PC-3 (cell line): ENCODE measurements at regions of chr3 and their contacts with region 1.

Region 1: DNA sequence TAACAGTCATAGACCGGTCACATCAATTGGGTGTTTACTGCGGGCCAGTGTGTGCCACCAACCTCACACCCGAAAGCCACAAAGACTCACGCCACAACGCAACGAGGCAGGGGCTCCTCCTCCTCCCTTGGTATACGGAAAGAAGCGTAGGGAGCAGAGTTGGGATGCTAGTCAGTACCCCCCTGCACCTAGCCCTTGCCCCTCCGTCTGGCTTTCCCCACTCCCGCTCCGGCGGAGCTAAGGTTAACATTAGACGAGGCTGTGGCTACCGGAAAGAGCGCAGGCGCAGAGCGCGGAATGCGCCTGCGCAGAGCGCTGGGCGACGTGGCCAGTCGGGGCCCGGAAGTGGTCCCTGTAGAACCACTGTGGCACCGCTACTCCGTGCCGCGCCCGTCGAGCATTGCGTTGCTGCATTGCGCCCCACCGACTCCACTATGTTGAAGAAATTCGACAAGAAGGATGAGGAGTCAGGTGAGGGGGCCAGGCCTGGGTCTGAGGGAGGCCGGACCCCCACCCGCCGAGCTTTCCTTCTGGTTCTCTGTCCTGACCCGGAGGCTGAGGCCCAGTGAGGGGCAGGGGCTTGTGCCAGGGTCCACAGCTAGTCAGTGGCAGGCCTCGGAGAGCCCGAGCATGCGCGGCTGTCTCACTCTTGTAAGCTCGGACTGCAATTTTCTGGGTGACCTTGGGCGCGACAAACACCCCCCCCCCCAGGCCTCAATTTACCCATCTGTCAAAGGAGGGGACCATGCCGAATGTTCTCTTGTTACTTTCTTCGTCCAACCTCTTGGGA is at the start of gene COPG1:
- DNase-seq: peak; percentile 87
- ATAC-seq: peak; percentile 74
- H3K4me3 ChIP-seq: peak within 1 kb of the TSS; percentile 87
- H3K27ac ChIP-seq: peak within 1 kb of the TSS; percentile 64
- H3K4me1 ChIP-seq: peaks cover 24% of the 10 kb centered on the region
- H3K27me3 ChIP-seq: no peaks in the 10 kb centered on the region
- CTCF ChIP-seq: no peak
- total RNA-seq, gene COPG1: 124 and 152 TPM in 2 replicates

Region 2: DNA sequence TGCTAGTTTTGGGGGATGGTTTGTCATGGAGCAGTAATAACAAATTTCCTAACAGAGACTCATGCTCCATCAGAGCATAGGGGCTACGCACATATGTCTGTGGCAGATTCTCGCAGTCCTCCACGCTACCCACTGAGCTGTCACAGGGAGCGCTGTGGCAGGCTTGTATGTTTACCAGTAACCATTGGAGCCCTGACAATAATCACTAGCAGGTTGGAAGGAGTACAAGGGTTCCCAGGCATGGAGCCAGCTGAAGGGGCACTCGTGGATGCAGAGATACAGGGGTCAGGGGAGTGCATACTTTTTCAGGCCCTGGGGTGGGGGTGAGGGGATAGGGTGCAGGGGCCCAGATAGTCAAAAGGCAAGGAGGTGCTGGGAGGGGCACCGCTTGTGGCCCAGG is 196.8 kb before region 1 on chr3:
- CTCF ChIA-PET with region 1: interaction called, 3 read pairs
- POLR2A ChIA-PET with region 1: no interaction called
- intact Hi-C with region 1: loop called (anchors 1 kb)
- DNase-seq: no peak
- ATAC-seq: no peak
- H3K4me3 ChIP-seq: no peak overlapping the region
- H3K27ac ChIP-seq: no peak overlapping the region
- H3K4me1 ChIP-seq: no peaks in the 10 kb centered on the region
- H3K27me3 ChIP-seq: no peaks in the 10 kb centered on the region
- CTCF ChIP-seq: no peak

Region 3: DNA sequence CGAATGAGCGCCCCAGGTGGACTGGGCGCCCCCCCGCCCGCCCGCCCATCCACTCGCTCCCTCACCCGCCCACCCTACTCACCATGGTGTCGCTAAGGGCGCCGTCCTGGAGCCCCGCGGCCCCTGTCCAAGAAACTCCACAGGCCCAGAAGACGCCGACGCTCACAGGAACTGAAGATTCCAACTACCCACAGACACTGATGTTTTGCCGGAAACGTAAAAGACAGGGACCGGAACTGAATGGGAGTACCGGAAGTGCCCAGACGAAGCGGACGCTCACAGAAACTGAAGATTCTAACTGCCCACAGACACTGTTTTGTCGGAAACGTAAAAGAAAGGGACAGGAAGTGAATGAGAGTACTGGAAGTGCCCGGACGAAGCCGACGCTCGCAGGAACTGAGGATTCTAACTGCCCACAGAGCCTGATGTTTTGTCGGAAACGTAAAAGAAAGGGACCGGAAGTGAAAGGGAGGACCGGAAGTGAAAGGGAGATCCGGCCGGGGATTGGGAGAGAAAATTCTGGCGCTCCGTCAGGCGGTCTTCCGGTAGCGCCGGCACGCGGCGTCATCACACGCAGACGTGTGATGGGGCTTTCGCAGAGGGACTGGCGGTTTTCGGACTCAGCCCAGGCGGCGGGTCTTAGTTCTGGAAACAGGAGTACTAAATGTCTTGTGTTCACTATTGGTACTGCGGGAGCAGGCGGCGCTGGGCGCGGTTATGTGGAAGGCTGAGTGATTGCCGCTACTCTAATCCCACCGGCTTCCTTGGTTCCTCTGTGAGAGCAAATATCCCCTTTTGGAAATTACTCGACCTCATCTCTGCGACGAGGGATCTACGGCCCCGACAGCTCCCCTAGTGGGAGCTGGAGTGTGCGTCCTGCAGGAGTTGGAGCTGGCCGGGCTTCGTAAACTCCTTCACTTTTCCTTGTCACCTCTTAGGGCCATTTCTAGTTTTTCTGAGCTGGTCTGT is 88.3 kb before region 1 on chr3 and contains the start of gene ISY1:
- CTCF ChIA-PET with region 1: interaction called, 28 read pairs
- POLR2A ChIA-PET with region 1: interaction called, 4 read pairs
- intact Hi-C with region 1: loop called (anchors 1 kb)
- DNase-seq: peak; percentile 90
- ATAC-seq: peak; percentile 75
- H3K4me3 ChIP-seq: peak within 1 kb of the TSS; percentile 97
- H3K27ac ChIP-seq: peak within 1 kb of the TSS; percentile 97
- H3K4me1 ChIP-seq: peaks cover 16% of the 10 kb centered on the region; the same call in 1 of the 2 replicates
- H3K27me3 ChIP-seq: no peaks in the 10 kb centered on the region
- CTCF ChIP-seq: peak; percentile 72
- total RNA-seq, gene ISY1: 17.1 and 18.1 TPM in 2 replicates

Region 4: DNA sequence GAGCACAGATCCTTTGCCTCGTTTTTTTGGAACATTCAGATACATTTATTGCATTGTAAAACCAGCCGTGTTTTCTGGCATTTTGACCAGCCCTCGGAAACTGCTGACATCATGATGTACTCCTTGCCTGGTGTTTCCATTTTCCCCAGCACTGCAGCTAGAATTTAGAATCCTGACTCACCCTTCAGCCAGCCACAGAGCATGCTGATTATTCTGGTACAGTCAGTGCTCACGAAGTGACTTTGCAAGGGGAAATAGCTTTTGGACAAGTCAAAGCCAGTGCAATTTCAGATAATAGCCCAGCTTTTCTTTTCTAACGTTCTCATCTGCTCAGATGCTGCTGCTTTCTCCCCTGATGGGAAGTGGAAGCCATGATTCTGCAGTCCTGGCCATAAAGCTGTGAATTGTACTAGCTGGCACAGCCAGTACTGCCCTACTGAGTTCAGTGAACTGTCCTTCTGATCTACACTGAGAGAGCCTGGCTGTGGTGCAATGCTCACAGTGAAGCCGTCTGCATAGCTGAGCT is 53.7 kb before region 1 on chr3:
- CTCF ChIA-PET with region 1: interaction called, 7 read pairs
- POLR2A ChIA-PET with region 1: no interaction called
- intact Hi-C with region 1: loop called (anchors 5 kb)
- DNase-seq: peak; percentile 83
- ATAC-seq: peak; percentile 98
- H3K4me3 ChIP-seq: peak overlapping the region; percentile 45
- H3K27ac ChIP-seq: peak overlapping the region; percentile 85
- H3K4me1 ChIP-seq: peaks cover 24% of the 10 kb centered on the region
- H3K27me3 ChIP-seq: no peaks in the 10 kb centered on the region
- CTCF ChIP-seq: no peak

Region 5: GRCh38 chr3:129233538-129233937 is 15.9 kb before region 1 on chr3:
- CTCF ChIA-PET with region 1: interaction called, 7 read pairs
- POLR2A ChIA-PET with region 1: no interaction called
- intact Hi-C with region 1: loop called (anchors 1 kb)
- DNase-seq: no peak
- ATAC-seq: no peak
- H3K4me3 ChIP-seq: no peak overlapping the region
- H3K27ac ChIP-seq: no peak overlapping the region
- H3K4me1 ChIP-seq: peaks cover 34% of the 10 kb centered on the region
- H3K27me3 ChIP-seq: no peaks in the 10 kb centered on the region
- CTCF ChIP-seq: no peak

Region 6: DNA sequence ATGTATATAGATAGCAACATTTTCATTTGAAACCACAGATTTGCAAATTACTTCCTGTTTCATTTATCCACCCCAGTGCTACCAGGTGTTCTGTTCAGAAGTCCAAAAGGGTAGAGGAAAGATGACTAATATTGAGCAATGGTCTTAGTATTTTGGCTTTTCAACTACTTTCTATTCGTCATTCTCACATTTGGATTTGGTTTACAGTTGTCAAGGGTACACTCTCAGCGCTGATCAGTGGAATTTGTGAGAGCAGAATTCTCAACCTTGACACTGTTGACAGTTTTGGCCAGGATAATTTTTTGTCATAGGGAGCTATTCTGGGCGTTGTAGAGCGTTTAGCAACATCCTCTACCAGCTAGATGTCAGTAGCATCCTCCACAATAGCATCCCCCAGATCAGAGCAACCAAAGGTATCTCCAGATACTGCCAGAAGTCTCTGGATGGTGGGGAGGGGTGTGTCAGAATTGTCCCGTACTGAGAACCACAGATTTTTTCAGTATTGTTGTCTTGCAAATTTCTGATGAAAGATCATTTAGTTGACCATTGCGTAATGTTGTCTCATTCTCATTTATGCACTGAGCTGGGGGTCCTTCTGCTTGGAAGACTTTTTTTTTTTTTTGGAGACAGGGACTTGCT is 33.4 kb after region 1 on chr3:
- CTCF ChIA-PET with region 1: no interaction called
- POLR2A ChIA-PET with region 1: no interaction called
- intact Hi-C with region 1: no loop called
- DNase-seq: peak; percentile 68
- ATAC-seq: peak; percentile 7
- H3K4me3 ChIP-seq: no peak overlapping the region
- H3K27ac ChIP-seq: peak overlapping the region; percentile 61
- H3K4me1 ChIP-seq: peaks cover 23% of the 10 kb centered on the region
- H3K27me3 ChIP-seq: no peaks in the 10 kb centered on the region
- CTCF ChIP-seq: no peak

Region 7: GRCh38 chr3:129650256-129650872 is 400.9 kb after region 1 on chr3:
- CTCF ChIA-PET with region 1: no interaction called
- POLR2A ChIA-PET with region 1: no interaction called
- intact Hi-C with region 1: no loop called
- DNase-seq: peak; percentile 77
- ATAC-seq: peak; percentile 32
- H3K4me3 ChIP-seq: no peak overlapping the region
- H3K27ac ChIP-seq: peak overlapping the region; percentile 79; the same call in 1 of the 2 replicates
- H3K4me1 ChIP-seq: peaks cover 34% of the 10 kb centered on the region
- H3K27me3 ChIP-seq: no peaks in the 10 kb centered on the region
- CTCF ChIP-seq: peak; percentile 75